Posterior cingulate gyrus (tissue), 11 donors: ENCODE measurements at regions of chr19 and their contacts with region 1.

Region 1: DNA sequence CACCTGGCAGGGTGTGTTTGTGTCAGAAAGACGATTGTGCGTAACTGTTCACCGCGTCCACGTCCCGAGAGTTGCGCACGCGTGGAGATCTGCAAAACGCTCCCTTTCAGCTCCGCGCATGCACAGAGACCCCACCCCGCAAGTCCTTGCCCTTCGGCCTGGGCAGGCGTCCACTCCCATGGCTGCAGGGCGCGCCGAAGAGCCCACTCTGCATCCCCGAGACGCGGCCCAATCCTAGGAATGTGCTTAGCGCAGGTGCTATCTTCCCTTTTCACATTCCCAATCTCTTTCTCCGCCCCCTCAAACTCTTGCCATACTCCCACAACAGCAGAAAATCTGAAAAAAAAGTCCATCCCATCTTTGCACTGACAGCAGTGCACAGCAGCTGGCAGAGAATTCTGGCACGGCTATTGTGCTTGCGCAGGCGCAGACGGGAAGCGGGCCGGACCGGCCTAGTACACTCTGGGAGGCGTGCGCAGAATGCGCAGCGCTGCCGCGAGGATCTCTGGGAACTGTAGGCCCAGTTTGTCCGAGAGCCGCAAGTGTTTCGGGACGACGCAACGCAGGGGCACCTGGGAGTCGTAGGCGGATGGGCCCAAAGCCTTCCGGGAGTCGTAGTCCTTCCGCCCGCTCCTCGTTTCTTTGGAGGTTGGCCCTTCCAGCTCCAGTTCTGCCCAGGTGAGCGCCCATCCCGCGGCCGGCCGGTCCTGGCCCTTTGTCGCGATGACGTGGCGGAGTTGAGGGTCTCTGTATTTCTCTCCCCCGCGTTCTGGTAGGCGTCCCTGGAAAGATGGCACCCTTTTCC is 23.1 kb downstream of the ZNF175 start:
- DNase-seq: peak; percentile 98 to 100 (median 99)

Region 2: DNA sequence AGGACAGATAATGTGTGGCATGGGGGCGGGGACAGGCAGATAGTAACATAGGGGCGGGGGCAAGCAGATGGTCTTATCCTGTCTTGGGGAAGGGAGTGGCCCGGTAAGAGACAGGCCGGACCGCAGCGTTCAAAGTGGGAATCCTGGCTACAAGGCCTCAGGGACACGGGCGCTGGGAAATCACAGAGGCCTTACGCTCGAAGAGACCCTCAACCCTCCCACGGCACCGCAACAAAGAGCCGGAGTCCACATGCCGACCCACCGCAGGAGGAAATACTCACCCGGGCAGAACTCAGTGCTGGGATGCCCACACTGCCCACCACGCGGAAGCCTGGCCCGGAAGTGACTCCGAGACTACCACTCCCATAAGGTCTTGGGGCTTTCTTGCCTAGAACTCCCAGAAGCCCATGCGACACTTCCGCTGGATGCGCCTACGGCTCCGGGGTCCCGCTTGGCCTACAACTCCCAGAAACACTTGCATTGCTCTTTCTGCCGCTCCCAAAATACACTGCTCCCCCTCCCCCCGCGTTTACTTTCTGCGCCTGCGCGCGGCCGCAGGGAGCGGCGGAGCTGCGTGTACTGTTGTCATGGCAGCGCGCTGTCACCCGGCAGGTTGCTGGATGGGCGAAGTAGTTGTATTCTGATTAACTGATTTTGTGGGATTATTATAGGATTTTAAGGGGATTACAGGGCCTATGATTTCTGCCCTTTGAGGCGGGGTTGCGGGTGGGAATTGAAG is 485.9 kb before region 1 on chr19 and contains the start of gene CTU1:
- intact Hi-C with region 1: loop called (anchors 2 kb)
- DNase-seq: peak; percentile 97 to 100 (median 99)

Region 3: GRCh38 chr19:51570962-51571575 is 23.1 kb before region 1 on chr19 and contains the start of gene ZNF175:
- intact Hi-C with region 1: loop called (anchors 1 kb)
- DNase-seq: peak; percentile 89 to 98 (median 93)

Region 4: DNA sequence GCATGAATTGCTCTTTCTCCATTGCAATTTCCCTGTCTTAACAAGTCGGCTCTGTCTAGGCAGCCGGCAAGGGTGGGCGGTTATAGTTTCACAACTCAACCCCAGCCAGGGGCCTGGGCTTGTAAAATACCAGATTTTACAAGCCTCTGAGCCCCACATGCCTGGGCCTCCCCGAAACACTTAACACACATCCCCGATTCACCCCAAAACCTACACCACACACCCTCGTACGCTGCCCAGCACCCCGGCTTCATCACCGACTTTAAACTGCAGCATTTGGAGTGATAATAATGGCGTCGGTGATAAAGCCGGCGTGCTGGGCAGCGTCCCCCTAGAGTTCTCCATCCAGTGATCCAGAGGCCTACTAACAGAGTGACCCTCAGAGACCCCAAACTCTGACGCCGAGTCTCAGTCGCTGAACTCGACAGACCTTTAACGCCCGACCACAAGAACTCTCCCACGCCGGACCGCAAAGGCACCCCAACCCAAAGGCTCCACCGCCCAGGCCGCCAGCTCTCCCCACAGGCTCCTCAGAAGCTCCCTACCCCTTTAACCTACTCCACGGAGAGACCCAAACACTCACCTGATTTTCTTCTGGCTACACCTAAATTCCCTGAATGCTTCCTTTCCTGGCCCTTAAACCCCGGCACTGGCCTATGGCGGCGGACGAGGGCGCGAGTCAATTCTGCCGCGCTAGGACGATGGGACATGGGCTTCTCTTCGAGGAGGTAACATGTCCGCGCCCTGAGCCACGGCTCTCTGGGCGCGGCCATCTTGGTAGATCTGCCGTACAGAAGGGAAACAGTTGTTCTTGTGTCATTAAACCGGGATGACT is 310.4 kb after region 1 on chr19 and contains the start of gene ZNF649:
- intact Hi-C with region 1: loop called (anchors 10 kb)
- DNase-seq: peak; percentile 64 to 97 (median 82)